ENCODE measurements at regions of chr7 and their contacts with region 1.

Region 1: DNA sequence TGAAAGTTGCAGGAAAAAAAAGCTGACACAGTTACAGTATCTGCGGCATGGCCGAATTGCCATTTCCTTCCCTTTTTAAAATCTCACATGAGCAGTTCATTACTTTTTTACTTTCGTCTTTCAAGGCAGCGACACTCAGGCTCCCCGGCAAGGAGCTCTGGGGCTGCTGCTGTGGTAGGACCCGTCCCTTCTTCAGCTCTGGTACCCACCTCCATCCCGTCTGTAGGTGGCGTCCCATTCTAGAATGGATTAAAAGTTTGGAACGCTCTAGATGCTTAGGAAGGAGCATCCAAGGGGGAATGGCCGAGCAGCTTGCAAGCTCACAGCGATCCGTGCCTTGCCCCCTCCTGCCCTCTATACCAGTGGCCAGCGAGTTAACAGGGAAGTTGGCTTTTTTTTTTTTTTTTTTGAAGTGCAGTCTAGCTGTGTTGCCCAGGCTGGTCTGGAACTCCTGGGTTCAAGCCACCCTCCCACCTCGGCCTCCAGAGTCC is 22.8 kb upstream of the TTYH3 start:
- DNase-seq: no peak
- ATAC-seq: peak in 1 of 8 donors; percentile 9
- H3K4me3 ChIP-seq: peak overlapping the region in 1 of 10 donors; percentile 29
- H3K27ac ChIP-seq: peak overlapping the region in 6 of 10 donors; percentile 8 to 90 (median 72)
- H3K4me1 ChIP-seq: peaks cover 14 to 74% (median 48%) of the 10 kb centered on the region in 9 donors
- H3K27me3 ChIP-seq: no peaks in the 10 kb centered on the region
- CTCF ChIP-seq: peak in 5 of 9 donors; percentile 10 to 41 (median 29)

Region 2: DNA sequence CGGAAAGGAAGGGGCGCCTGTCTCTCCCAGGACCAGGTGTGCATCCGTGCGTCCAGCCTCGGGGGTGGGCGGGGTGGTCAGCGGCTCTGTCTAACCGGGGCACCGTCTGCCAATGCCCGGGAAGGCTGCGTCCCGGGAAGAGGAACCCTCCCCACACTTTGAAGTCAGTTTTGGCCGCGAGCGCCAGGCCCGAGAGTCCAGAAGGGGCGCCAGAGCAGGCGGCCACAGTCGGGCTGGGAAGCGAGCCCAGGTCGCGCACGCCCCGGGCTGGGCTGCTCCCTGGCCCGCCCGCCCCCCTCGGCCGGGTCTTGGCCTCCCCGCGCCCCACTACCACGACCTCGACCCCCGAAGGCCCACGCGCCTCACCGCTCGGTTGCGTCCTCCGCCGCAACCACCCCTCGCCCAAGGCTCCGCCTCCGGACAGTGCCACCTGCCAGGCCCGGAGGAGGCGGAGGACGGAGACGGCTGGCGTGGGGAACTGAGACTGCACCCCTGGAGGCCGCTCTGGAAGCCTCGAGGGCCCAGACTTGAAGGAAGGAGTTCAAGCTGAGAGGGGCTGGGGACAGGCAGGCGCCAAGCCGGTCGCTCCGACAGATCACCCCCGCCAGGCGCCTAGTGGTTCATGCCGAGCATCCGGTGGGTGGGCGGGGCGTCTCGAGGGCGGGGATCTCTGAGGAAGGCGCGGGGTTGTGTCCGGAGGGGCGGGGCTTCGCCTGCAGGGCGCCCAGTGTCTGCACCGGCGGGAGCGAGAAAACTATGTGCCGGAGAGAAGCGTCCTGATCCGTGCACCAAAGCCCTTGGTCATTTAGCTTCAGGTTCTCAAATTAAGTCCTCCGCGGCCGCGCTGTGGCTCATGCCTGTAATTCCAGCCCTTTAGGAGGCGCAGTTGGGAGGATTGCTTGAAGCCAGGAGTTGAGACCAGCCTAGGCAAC is 53.6 kb before region 1 on chr7 and contains the start of gene BRAT1:
- intact Hi-C with region 1: loop called in 1 of 10 experiments (anchors 5 kb)
- DNase-seq: peak; percentile 97 to 98
- ATAC-seq: peak; percentile 91 to 97 (median 94)
- H3K4me3 ChIP-seq: peak within 1 kb of the TSS; percentile 86 to 99 (median 92)
- H3K27ac ChIP-seq: peak within 1 kb of the TSS; percentile 95 to 100 (median 100)
- H3K4me1 ChIP-seq: peaks cover 0 to 62% (median 36%) of the 10 kb centered on the region in 9 donors
- H3K27me3 ChIP-seq: no peaks in the 10 kb centered on the region
- CTCF ChIP-seq: peak; percentile 16 to 71 (median 45)
- total RNA-seq, gene BRAT1: 10.6 to 18.2 (median 12.8) TPM

Region 3: DNA sequence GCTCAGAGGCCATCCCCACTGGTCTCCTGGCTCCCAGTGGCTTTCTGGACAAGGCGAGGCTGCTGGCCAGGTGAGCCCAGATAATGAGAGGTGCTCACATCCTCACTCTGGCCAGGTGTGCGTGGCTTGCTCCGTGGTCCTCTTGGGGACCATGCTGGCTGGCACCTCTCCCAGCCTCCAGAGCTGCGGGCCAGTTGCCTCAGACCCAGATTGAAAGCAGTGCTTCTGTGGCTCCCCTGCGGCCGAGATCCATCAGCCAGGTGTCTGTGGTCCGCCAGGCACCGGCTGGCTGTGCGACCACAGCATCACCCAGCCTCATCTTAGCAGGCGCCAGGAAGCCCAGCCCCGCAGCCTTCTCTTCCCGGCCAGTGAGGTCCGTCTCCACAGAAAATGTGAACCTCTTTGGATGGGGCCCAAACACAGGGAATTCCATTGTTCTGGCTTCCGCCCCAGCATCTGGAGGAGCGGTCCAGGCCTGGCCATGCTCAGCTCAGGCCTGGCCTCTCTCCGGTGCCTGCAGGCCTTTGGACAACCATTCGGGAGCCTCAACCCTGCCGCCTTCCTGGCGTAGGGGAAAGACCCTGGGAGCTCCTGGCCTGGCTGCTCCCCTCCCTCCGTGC is 17.6 kb after region 1 on chr7:
- intact Hi-C with region 1: loop called in 1 of 10 experiments (anchors 2 kb)
- DNase-seq: peak in 1 of 2 donors; percentile 82
- ATAC-seq: peak; percentile 18 to 56 (median 45)
- H3K4me3 ChIP-seq: no peak overlapping the region
- H3K27ac ChIP-seq: peak overlapping the region in 9 of 10 donors; percentile 54 to 86 (median 69)
- H3K4me1 ChIP-seq: peaks cover 7 to 54% (median 25%) of the 10 kb centered on the region in 9 donors
- H3K27me3 ChIP-seq: no peaks in the 10 kb centered on the region
- CTCF ChIP-seq: no peak

Region 4: GRCh38 chr7:2641406-2642393 is 32.7 kb after region 1 on chr7:
- intact Hi-C with region 1: loop called in 3 of 10 experiments (anchors 5 kb)
- DNase-seq: peak; percentile 92 to 94
- ATAC-seq: peak; percentile 74 to 88 (median 82)
- H3K4me3 ChIP-seq: peak overlapping the region in 9 of 10 donors; percentile 3 to 45 (median 33)
- H3K27ac ChIP-seq: peak overlapping the region; percentile 73 to 96 (median 82)
- H3K4me1 ChIP-seq: peaks cover 32 to 97% (median 73%) of the 10 kb centered on the region in 9 donors
- H3K27me3 ChIP-seq: no peaks in the 10 kb centered on the region
- CTCF ChIP-seq: no peak